ENCODE measurements at regions of chr17 and their contacts with region 1.

Region 1: GRCh38 chr17:28252436-28252835 is 66.6 kb upstream of the TMEM97 start:
- DNase-seq: no peak
- H3K4me3 Mint-ChIP-seq: no peak overlapping the region
- H3K27ac Mint-ChIP-seq: no peak overlapping the region
- H3K4me1 Mint-ChIP-seq: peaks cover 4% of the 10 kb centered on the region
- H3K27me3 Mint-ChIP-seq: peaks cover 13% of the 10 kb centered on the region

Region 2: GRCh38 chr17:27892866-27893769 is 359.3 kb before region 1 on chr17 and contains the start of gene LYRM9:
- intact Hi-C with region 1: loop called (anchors 1 kb)
- DNase-seq: peak; percentile 99
- H3K4me3 Mint-ChIP-seq: peak within 1 kb of the TSS; percentile 83
- H3K27ac Mint-ChIP-seq: peak within 1 kb of the TSS; percentile 70
- H3K4me1 Mint-ChIP-seq: peaks cover 21% of the 10 kb centered on the region
- H3K27me3 Mint-ChIP-seq: peaks cover 29% of the 10 kb centered on the region
- total RNA-seq, gene LYRM9: 2.4 TPM in 2 replicates

Measured in activated CD4-positive, alpha-beta T cell treated with anti-CD3 and anti-CD28 coated beads, Interleukin-2, amount 10 ng/mL, durations not matched to agents 24 days and 14 days (primary cell).